Mammary epithelial cell (primary cell): ENCODE measurements at regions of chr3 and their contacts with region 1.

Region 1: DNA sequence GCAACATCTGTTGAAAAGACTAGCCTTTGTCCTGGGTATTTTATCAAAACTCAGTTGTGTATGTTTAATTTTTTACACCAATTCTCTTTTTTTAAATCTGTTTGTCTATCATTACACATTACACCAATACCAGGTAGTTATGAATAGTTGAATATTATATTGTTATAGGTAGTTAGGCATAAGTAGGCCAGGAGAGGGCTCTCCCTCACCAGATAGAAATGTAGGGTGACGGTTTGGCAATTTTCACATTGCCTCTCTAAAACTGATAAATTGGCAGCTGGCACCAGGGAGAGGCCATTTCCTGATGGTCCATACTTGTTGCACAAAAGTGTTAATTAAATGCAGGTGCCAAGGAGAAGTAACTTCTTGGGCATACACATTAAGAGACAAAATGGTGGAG is 483.1 kb upstream of the EPHA6 start:
- DNase-seq: no peak
- H3K4me3 ChIP-seq: no peak overlapping the region
- H3K27ac ChIP-seq: no peak overlapping the region
- H3K4me1 ChIP-seq: no peaks in the 10 kb centered on the region
- H3K27me3 ChIP-seq: no peaks in the 10 kb centered on the region
- CTCF ChIP-seq: peak; percentile 9 to 47

Region 2: DNA sequence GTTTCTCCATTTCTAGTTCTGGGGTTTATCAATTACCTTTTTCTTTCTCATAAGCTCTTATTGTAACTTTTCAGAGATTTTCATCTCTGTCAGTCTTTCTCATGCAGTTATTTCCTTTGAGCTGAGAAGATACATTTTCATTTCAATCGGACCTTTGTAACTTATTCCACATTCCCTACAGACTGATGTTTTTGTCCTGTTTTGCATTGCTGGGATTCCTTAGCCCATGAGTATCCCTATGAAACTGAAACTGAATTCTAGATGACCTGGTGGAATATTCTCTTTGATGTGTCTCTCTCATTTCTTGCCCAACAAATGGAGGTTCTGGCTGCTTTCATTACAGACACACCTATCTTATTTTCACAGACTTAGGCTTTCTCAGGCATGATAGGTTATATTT is 472.5 kb after region 1 on chr3:
- CTCF ChIA-PET with region 1: no interaction called
- dilution Hi-C with region 1: no loop called
- in situ Hi-C with region 1: loop called in 1 of 2 experiments (anchors 10 kb)
- intact Hi-C with region 1: no loop called
- DNase-seq: no peak
- H3K4me3 ChIP-seq: no peak overlapping the region
- H3K27ac ChIP-seq: no peak overlapping the region
- H3K4me1 ChIP-seq: no peaks in the 10 kb centered on the region
- H3K27me3 ChIP-seq: no peaks in the 10 kb centered on the region
- CTCF ChIP-seq: no peak

Region 3: DNA sequence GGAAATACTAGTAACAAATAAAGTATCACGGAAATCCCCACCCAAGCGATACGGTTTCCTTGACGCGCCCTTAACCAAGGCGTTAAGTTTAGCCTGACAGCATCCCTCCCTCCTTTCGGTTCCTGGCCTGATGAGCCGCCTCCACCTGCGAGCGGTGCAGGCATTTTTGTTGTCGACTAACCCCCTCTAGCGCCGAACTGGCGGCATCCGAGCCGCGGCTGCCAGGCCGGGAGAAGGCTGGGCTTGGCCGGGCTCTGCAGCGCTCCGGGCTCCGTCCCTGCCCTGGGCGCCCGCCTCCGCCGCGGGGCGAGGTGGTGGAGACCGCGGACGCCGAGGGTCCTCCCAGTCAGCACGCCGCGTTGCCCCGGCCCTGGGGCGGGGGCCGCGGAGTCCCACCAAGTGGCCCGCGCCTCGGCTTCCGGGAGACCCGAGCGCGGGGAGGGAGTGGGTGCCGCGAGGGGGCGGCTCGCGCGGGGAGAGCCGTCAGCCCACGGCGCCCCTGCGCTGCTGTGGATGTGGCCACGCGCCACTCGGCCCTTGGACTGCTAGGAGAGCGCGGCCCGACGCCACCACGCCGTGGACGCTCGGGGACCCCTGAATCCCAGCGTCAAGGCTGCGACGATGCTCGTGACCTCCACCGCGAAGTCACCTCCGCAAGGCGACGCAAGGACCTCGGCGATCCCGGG is 481.9 kb after region 1 on chr3:
- CTCF ChIA-PET with region 1: no interaction called
- dilution Hi-C with region 1: no loop called
- in situ Hi-C with region 1: loop called in 1 of 2 experiments (anchors 10 kb)
- intact Hi-C with region 1: loop called (anchors 1 kb)
- DNase-seq: peak; percentile 57
- H3K4me3 ChIP-seq: peak overlapping the region; percentile 47 to 52 (median 48)
- H3K27ac ChIP-seq: no peak overlapping the region
- H3K4me1 ChIP-seq: peaks cover 13% of the 10 kb centered on the region
- H3K27me3 ChIP-seq: peaks cover 17% of the 10 kb centered on the region
- CTCF ChIP-seq: peak; percentile 42 to 73